Gastrocnemius medialis (tissue), 4 donors: ENCODE measurements at regions of chr1 and their contacts with region 1.

Region 1: DNA sequence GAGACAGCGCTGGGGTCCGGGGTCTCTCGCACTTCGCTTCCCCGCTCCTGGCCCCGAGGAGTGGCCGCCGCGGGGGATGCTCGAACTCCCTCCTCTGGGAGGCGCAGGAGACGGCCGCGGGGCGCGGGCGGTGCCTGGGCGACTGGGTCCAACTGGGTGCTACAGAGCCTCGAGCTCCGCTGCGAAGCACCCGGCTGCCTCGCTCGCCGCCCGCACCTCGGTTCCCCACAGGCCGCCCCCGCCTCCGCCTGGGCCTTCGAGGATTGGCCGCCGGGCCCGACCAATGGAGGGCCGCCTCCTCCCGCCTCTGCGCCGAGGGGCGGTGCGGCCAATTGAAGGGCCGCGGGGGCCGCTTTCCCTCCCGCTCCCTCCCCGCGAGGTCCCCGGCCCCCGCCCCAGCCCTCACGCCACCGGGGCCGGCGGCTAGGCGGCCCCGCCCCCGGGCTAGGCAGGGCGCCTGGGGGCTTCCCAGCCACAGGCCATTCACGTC is at the start of gene CNN3:
- DNase-seq: peak; percentile 65 to 73
- ATAC-seq: peak; percentile 69 to 73
- H3K4me3 ChIP-seq: peak within 1 kb of the TSS; percentile 57 to 71 (median 70)
- H3K27ac ChIP-seq: peak within 1 kb of the TSS; percentile 81 to 88 (median 84)
- H3K4me1 ChIP-seq: peaks cover 19 to 20% of the 10 kb centered on the region in 2 donors
- H3K27me3 ChIP-seq: peaks cover 45 to 47% (median 46%) of the 10 kb centered on the region in 3 donors
- CTCF ChIP-seq: no peak
- POLR2A ChIP-seq: peak; percentile 73 to 89
- total RNA-seq, gene CNN3: 11.9 to 21.8 (median 16.1) TPM

Region 2: GRCh38 chr1:94863919-94864318 is 63.0 kb before region 1 on chr1:
- in situ Hi-C with region 1: no loop called
- intact Hi-C with region 1: loop called (anchors 1 kb)
- DNase-seq: peak in 1 of 2 donors; percentile 31
- ATAC-seq: peak; percentile 71 to 81
- H3K4me3 ChIP-seq: peak overlapping the region in 1 of 4 donors; percentile 22
- H3K27ac ChIP-seq: peak overlapping the region; percentile 63 to 74 (median 65)
- H3K4me1 ChIP-seq: peaks cover 13 to 19% of the 10 kb centered on the region in 2 donors
- H3K27me3 ChIP-seq: peaks cover 0 to 3% (median 0%) of the 10 kb centered on the region in 3 donors
- CTCF ChIP-seq: no peak
- POLR2A ChIP-seq: no peak

Region 3: GRCh38 chr1:94903280-94904009 is 23.5 kb before region 1 on chr1:
- in situ Hi-C with region 1: no loop called
- intact Hi-C with region 1: no loop called
- DNase-seq: no peak
- ATAC-seq: no peak
- H3K4me3 ChIP-seq: no peak overlapping the region
- H3K27ac ChIP-seq: no peak overlapping the region
- H3K4me1 ChIP-seq: no peaks in the 10 kb centered on the region
- H3K27me3 ChIP-seq: no peaks in the 10 kb centered on the region
- CTCF ChIP-seq: no peak
- POLR2A ChIP-seq: no peak